ENCODE measurements at regions of chr1 and their contacts with region 1.

Region 1: DNA sequence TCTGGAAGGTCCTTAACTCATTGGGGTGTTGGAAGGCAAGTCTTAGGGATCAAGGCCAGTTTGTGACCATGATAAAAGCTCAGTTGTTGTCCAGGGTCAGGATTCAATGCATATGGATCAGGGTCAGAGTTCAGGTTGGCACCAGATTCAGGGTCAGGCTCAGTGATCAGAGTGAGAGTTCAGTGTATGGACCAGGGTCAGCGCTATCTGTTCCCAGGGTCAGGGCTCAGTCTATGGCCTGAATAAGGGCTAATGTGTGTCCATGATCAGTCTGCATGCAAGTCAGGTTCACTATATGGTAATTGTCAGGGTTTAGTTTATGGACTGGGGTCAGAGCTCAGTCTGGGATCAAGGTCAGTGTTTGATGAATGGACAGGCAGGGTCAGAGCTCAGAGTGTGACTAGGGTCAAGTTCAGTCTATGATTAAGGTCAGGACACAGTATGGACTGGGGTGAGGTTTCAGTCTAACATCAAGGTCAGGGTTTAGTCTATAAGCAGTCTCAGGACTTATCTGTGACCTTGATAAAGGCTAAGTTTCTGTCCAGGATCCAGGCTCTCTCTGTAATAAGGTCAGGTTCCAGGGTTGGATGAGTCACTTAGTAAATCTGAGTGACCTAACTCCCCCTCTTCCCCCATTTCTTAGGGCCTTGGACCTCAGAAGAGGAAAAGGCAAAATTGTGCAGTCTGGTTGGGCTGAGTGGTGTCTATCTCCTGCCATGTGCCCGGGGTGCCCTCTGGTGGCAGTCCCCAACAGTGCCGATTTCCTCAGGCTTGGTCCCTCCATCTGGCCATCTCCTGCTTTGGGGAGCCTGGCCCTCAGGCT is 23.8 kb downstream of the KNCN start:
- DNase-seq: peak; percentile 84
- H3K4me3 Mint-ChIP-seq: no peak overlapping the region
- H3K27ac Mint-ChIP-seq: peak overlapping the region; percentile 36
- H3K4me1 Mint-ChIP-seq: peaks cover 51% of the 10 kb centered on the region
- H3K27me3 Mint-ChIP-seq: peaks cover 22% of the 10 kb centered on the region

Region 2: GRCh38 chr1:46364612-46365011 is 163.1 kb before region 1 on chr1:
- CTCF ChIA-PET with region 1: no interaction called
- POLR2A ChIA-PET with region 1: no interaction called
- DNase-seq: no peak
- H3K4me3 Mint-ChIP-seq: no peak overlapping the region
- H3K27ac Mint-ChIP-seq: no peak overlapping the region
- H3K4me1 Mint-ChIP-seq: no peaks in the 10 kb centered on the region
- H3K27me3 Mint-ChIP-seq: no peaks in the 10 kb centered on the region

Region 3: DNA sequence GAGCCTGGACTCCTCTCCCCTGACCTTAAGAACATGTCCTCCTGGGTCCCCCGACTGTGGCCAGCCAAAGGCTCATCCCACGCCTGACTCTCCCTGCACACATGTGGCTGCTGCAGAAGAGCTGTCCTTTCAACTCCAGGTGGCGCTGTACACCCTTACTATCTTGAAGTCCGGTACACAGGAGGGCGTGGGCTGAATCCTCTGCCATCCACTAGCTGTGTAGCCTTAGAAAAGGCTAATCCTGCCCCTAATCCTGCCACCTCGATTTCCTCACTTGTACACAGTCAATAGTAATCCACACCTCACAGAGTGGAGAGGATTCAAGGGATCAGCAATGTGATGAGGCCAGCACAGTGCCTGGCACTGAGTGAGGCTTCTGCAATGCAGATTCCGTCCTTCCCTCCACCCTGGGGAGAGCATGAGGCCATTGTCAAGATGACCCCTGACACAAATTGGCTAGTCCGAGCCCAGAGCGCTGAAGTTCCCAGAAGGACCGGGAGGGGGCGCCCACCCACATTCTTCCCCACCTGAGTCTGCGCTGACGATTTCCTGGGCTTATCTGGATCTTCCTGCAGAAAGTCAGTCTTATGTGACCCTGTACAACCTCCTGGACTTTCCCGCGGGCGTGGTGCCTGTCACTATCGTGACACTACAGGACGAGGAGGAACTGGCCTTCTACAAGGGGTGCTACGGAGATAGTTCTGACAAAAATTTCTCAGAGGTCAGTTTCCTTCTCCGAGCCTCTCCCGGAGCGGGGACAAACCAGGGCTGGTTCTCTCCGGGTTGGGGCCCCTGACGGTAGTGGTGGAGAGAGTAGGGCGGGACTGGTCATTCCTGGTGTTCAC is 85.1 kb before region 1 on chr1:
- CTCF ChIA-PET with region 1: interaction called, 89 read pairs
- POLR2A ChIA-PET with region 1: interaction called, 4 read pairs
- DNase-seq: peak; percentile 73
- H3K4me3 Mint-ChIP-seq: peak overlapping the region; percentile 78
- H3K27ac Mint-ChIP-seq: peak overlapping the region; percentile 57
- H3K4me1 Mint-ChIP-seq: peaks cover 13% of the 10 kb centered on the region
- H3K27me3 Mint-ChIP-seq: peaks cover 27% of the 10 kb centered on the region

Region 4: GRCh38 chr1:46449223-46450159 is 78.2 kb before region 1 on chr1:
- CTCF ChIA-PET with region 1: interaction called, 89 read pairs
- POLR2A ChIA-PET with region 1: interaction called, 4 read pairs
- DNase-seq: peak; percentile 25
- H3K4me3 Mint-ChIP-seq: no peak overlapping the region
- H3K27ac Mint-ChIP-seq: no peak overlapping the region
- H3K4me1 Mint-ChIP-seq: peaks cover 19% of the 10 kb centered on the region
- H3K27me3 Mint-ChIP-seq: peaks cover 76% of the 10 kb centered on the region

Region 5: GRCh38 chr1:46477153-46477929 is 50.3 kb before region 1 on chr1:
- CTCF ChIA-PET with region 1: interaction called, 87 read pairs
- POLR2A ChIA-PET with region 1: interaction called, 3 read pairs
- DNase-seq: peak; percentile 79
- H3K4me3 Mint-ChIP-seq: no peak overlapping the region
- H3K27ac Mint-ChIP-seq: no peak overlapping the region
- H3K4me1 Mint-ChIP-seq: no peaks in the 10 kb centered on the region
- H3K27me3 Mint-ChIP-seq: peaks cover 41% of the 10 kb centered on the region

Region 6: DNA sequence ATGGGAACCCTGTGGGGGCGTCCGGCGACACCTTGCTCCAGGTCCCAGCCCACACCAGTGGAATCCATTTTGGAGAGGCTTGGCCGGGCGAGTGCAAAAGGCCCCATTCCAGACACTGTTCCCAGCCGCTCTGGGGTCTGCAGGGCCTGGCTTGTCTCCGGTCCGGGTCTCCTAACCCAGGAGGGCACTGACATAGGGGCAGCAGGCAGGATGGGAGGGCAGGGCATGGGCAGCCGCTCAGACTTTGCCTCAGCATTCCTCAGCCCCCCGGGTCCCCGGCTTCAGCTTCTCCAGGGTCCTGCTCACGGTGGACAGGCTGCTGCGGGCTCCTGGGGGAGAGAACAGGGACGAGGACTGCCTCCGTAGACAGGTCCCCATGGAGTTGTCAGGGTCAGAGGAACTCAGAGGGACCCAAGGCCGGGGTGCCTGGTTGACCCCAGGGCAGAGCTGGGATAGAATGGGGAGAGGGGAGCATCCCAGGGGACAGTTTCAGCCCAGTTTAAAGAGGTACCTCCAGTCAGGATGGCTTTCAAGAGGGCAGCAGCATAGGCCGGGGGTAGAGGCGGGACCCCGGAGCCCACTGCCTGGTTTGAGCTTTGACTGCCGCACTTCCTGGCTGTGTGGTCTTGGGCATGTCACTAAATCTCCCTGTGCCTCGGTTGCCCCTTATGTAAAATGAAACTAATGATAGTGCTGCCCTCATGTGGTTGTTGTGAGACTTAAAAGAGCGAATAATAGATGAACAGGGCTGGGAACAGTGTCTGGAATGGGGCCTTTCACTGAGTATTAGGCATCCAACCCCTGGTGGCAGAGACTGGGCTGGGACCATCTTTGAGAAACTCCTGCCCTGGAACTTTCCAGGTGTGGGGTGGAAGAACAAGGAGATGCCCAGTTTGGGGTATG is 20.0 kb after region 1 on chr1:
- CTCF ChIA-PET with region 1: interaction called, 27 read pairs
- POLR2A ChIA-PET with region 1: interaction called, 6 read pairs
- DNase-seq: peak; percentile 23
- H3K4me3 Mint-ChIP-seq: no peak overlapping the region
- H3K27ac Mint-ChIP-seq: no peak overlapping the region
- H3K4me1 Mint-ChIP-seq: peaks cover 20% of the 10 kb centered on the region
- H3K27me3 Mint-ChIP-seq: peaks cover 42% of the 10 kb centered on the region

Region 7: DNA sequence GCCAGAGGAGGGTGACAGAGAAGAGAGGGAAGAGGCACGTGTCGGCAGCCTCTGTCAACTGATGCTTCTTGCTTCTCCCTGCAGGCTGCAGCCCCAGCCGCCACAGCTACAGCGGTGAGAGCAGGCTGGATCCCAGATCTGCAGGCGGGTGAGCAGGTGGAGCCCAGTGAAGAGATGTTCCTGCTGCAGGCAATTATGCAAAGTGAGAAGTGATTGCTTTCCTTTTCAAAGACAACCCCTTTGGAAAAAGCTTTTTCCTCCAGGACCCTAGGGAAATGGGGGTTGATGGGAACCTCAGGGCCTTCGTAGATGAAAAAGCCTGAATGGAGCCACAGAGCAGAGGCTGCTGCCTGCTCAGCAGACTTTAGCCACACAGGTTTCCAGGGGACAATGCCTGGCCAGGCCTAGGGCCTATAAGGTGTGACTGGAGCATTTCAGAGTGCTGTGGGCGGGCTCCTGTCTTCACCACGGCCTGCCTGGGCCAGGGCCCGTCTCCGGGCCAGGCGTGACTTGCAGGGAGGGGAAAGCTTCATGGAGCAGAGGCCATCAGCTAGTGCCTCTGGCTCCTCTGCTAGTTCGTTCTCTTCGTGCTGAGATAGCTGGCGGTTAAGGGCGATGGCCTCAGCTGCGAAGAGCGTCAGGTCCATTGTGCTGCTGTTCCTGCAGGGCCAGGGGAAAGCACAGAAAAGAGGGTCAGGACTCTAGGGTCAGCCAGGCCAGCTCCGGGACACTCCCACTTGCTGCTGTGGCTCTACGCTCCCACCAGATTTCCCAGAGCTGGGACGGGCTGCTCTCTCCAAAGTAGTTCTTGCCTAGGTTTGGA is 30.7 kb after region 1 on chr1:
- CTCF ChIA-PET with region 1: no interaction called
- POLR2A ChIA-PET with region 1: no interaction called
- DNase-seq: no peak
- H3K4me3 Mint-ChIP-seq: no peak overlapping the region
- H3K27ac Mint-ChIP-seq: no peak overlapping the region
- H3K4me1 Mint-ChIP-seq: peaks cover 8% of the 10 kb centered on the region
- H3K27me3 Mint-ChIP-seq: no peaks in the 10 kb centered on the region

Region 8: DNA sequence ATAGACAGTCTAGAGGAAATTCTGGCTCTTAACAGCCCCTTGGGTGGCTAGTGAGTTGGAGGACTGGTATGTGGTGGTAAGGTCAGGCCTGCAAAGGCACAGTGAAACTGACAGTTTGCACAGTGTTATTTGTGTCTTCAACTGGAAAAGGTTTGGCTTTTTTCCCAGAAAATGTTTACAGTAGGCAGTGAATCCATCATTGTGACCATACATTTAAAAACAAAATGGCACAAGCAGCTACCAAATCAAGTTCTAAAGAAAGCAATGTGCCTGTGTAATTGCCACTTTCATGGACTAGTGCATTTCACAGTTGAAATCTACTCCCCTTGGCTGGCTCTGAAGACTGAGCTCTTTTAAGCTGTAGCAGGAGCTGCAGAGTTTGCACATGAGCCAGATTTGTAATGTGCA is 115.7 kb after region 1 on chr1:
- CTCF ChIA-PET with region 1: no interaction called
- POLR2A ChIA-PET with region 1: no interaction called
- DNase-seq: no peak
- H3K4me3 Mint-ChIP-seq: no peak overlapping the region
- H3K27ac Mint-ChIP-seq: no peak overlapping the region
- H3K4me1 Mint-ChIP-seq: peaks cover 2% of the 10 kb centered on the region
- H3K27me3 Mint-ChIP-seq: no peaks in the 10 kb centered on the region

Region 9: GRCh38 chr1:46718727-46719622 is 191.3 kb after region 1 on chr1 and contains the start of gene EFCAB14:
- CTCF ChIA-PET with region 1: interaction called, 43 read pairs
- POLR2A ChIA-PET with region 1: interaction called, 4 read pairs
- DNase-seq: peak; percentile 100
- H3K4me3 Mint-ChIP-seq: peak within 1 kb of the TSS; percentile 94
- H3K27ac Mint-ChIP-seq: peak within 1 kb of the TSS; percentile 88
- H3K4me1 Mint-ChIP-seq: peaks cover 47% of the 10 kb centered on the region
- H3K27me3 Mint-ChIP-seq: no peaks in the 10 kb centered on the region
- total RNA-seq, gene EFCAB14: 96.1 to 96.9 TPM

Region 10: DNA sequence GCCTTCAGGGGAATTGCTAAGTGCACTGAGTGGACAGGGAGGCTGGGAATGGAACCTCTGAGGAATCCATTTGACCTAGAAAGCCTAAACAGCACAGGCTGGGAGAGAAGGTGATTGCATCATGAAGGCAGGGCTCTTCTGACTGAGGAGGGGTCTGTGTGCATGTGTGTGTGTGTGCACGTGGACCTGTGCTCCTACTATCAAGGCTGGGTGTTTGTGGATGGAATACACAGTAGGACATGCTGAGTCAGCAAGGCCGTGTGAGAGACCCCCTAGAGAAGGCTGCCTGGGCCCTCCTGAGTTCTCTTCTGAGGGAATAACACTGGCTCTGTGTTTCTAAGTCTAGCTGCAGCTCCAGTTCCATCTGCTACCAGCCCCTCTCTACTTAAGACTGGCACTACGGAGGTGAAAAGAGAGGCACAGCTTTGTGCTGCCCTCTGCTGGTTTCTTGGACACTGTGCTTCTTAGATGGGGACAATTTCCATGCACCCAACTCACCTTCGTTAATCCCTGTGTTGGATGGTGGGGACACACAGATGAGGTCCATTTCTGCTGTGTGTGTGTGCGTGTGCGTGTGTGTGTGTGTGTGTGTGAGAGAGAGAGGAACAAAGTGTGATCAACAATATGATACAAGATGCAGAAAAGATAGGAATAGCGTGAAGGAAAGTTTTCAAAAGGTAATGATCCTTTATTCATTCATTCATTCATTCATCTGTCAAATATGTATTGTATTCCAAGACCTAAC is 197.5 kb after region 1 on chr1:
- CTCF ChIA-PET with region 1: interaction called, 43 read pairs
- POLR2A ChIA-PET with region 1: no interaction called
- DNase-seq: peak; percentile 74
- H3K4me3 Mint-ChIP-seq: no peak overlapping the region
- H3K27ac Mint-ChIP-seq: no peak overlapping the region
- H3K4me1 Mint-ChIP-seq: peaks cover 7% of the 10 kb centered on the region
- H3K27me3 Mint-ChIP-seq: peaks cover 33% of the 10 kb centered on the region